Activated CD4-positive, alpha-beta T cell treated with anti-CD3 and anti-CD28 coated beads for 36 hours (primary cell): ENCODE measurements at regions of chr3 and their contacts with region 1.

Region 1: DNA sequence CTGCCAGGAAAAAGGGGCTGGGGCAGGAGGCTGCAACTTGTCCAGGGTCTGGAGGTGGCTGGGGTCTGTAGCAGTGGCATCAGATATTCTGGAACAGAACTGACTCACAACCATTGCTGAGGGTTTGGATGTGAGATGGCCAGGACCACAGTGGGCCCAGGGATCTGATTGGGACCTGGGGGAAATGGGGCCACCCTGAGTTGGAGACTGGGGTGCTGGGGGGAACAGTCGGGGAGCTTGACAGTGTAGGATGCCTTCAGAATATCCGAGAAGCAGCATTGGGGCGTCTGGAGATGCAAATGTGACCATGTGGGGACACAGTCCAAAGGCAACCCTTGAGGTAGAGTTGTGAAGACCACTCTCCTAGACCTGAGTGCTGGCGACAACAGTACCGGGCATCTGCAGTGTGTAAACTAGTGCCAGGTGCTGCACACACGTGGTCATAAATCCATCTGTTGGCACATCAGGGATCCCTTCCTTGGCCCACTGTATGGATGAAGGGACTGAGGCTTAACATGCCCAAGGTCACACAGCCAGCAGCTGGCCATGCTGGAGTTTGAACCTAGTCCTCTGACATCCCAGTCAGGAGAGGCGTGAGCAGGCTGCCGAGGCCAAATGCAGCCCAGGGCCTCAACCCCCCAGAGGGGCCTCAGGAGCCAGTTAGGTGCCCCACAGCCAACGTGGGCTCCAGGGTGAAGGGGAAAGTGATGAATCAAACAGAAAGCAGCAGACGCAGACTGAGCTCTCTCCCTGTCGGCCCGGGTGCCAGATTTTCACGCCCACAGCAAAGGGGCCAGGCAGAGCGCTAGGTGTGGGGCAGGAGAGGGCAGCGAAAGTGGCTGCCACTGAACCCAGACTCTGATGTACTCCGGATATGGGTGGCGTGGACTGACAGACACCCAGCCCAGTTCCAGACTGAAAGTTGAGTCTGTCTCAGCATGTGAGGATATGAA is 18.8 kb downstream of the HEMK1 start:
- DNase-seq: peak; percentile 94
- ATAC-seq: peak; percentile 49
- H3K4me3 Mint-ChIP-seq: peak overlapping the region; percentile 42
- H3K27ac Mint-ChIP-seq: peak overlapping the region; percentile 100
- H3K4me1 Mint-ChIP-seq: peaks cover 95% of the 10 kb centered on the region
- H3K27me3 Mint-ChIP-seq: no peaks in the 10 kb centered on the region

Region 2: DNA sequence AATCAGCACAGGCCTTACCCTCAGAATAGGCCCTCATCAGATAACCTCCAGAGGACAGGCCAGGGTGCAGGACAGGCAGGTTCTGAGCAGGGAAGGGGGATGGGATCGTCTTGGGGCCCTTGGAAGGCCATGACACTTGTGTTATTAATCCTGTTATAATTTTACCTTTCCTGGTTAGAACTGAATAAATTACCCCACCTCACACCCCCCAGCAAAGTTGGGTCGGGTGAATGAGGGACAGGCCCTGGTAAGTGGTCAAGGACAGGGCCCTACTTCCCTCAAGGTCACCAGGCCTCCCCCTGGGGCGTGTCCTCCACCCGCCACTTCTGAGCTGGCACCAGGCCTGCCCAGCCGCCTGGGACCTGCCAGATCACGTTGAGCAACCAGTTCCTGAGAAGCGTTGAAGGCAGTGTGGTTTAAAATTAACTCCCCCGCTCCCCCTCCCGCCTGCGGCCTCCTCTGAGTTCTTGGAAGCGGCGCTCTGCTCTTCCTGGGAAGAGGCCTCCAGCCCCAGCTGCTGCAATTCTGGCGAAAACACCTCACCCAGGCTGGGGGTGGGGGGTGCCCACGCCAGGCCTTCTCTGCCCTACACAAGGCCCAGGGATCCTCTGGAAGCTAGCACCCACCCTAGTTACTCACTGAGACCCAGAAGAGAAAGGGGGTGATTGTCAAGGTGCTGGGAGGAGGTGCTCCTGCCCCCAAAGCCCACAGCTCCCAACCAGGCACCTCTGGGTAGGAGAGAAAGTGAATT is 12.9 kb after region 1 on chr3:
- CTCF ChIA-PET with region 1: interaction called, 647 read pairs
- POLR2A ChIA-PET with region 1: interaction called, 585 read pairs
- intact Hi-C with region 1: loop called (anchors 1 kb)
- DNase-seq: peak; percentile 96
- ATAC-seq: peak; percentile 55
- H3K4me3 Mint-ChIP-seq: peak overlapping the region; percentile 96
- H3K27ac Mint-ChIP-seq: peak overlapping the region; percentile 100
- H3K4me1 Mint-ChIP-seq: peaks cover 83% of the 10 kb centered on the region
- H3K27me3 Mint-ChIP-seq: no peaks in the 10 kb centered on the region

Region 3: DNA sequence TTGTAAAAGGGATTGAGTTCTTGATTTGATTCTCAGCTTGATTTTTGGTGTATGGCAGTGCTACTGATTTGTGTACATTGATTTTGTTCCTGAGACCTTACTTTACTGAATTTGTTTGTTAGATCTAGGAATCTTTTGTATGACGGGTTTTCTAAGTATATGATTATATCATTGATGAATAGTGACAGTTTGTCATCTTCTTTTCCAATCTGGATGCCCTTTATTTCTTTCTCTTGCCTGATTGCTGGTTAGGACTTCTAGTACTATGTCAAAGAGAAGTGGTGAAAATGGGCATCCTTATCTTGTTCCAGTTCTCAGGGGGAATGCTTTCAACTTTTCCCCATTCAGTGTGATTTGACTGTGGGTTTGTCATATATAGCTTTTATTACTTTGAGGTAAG is 189.6 kb after region 1 on chr3:
- CTCF ChIA-PET with region 1: no interaction called
- POLR2A ChIA-PET with region 1: no interaction called
- intact Hi-C with region 1: no loop called
- DNase-seq: no peak
- ATAC-seq: no peak
- H3K4me3 Mint-ChIP-seq: no peak overlapping the region
- H3K27ac Mint-ChIP-seq: no peak overlapping the region
- H3K4me1 Mint-ChIP-seq: no peaks in the 10 kb centered on the region
- H3K27me3 Mint-ChIP-seq: peaks cover 9% of the 10 kb centered on the region